CD4-positive, alpha-beta T cell (primary cell): ENCODE measurements at regions of chr16 and their contacts with region 1.

Region 1: GRCh38 chr16:58661199-58661830 is 23.3 kb downstream of the SLC38A7 start:
- DNase-seq: peak in 3 of 14 experiments; percentile 25 to 64 (median 52)
- ATAC-seq: no peak
- H3K4me3 ChIP-seq: no peak overlapping the region
- H3K4me3 Mint-ChIP-seq: no peak overlapping the region
- H3K27ac ChIP-seq: no peak overlapping the region
- H3K27ac Mint-ChIP-seq: no peak overlapping the region
- H3K4me1 ChIP-seq: no peaks in the 10 kb centered on the region
- H3K4me1 Mint-ChIP-seq: no peaks in the 10 kb centered on the region
- H3K27me3 ChIP-seq: no peaks in the 10 kb centered on the region
- H3K27me3 Mint-ChIP-seq: peaks cover 4% of the 10 kb centered on the region
- CTCF ChIP-seq: peak; percentile 15

Region 2: GRCh38 chr16:57955572-57956188 is 705.6 kb before region 1 on chr16:
- CTCF ChIA-PET with region 1: no interaction called
- POLR2A ChIA-PET with region 1: no interaction called
- intact Hi-C with region 1: no loop called
- DNase-seq: no peak
- ATAC-seq: no peak
- H3K4me3 ChIP-seq: no peak overlapping the region
- H3K4me3 Mint-ChIP-seq: no peak overlapping the region
- H3K27ac ChIP-seq: no peak overlapping the region
- H3K27ac Mint-ChIP-seq: no peak overlapping the region
- H3K4me1 ChIP-seq: no peaks in the 10 kb centered on the region
- H3K4me1 Mint-ChIP-seq: no peaks in the 10 kb centered on the region
- H3K27me3 ChIP-seq: no peaks in the 10 kb centered on the region
- H3K27me3 Mint-ChIP-seq: no peaks in the 10 kb centered on the region
- CTCF ChIP-seq: no peak

Region 3: GRCh38 chr16:58336332-58337089 is 324.8 kb before region 1 on chr16:
- CTCF ChIA-PET with region 1: no interaction called
- POLR2A ChIA-PET with region 1: no interaction called
- intact Hi-C with region 1: loop called in 1 of 2 experiments (anchors 2 kb)
- DNase-seq: peak; percentile 61 to 88 (median 81)
- ATAC-seq: peak; percentile 85
- H3K4me3 ChIP-seq: no peak overlapping the region
- H3K4me3 Mint-ChIP-seq: peak overlapping the region; percentile 23
- H3K27ac ChIP-seq: no peak overlapping the region
- H3K27ac Mint-ChIP-seq: no peak overlapping the region
- H3K4me1 ChIP-seq: peaks cover 8% of the 10 kb centered on the region
- H3K4me1 Mint-ChIP-seq: peaks cover 7% of the 10 kb centered on the region
- H3K27me3 ChIP-seq: peaks cover 0 to 1% of the 10 kb centered on the region in 2 experiments
- H3K27me3 Mint-ChIP-seq: peaks cover 14% of the 10 kb centered on the region
- CTCF ChIP-seq: peak; percentile 97

Region 4: GRCh38 chr16:58515125-58515870 is 146.0 kb before region 1 on chr16 and contains the start of gene SETD6:
- CTCF ChIA-PET with region 1: no interaction called
- POLR2A ChIA-PET with region 1: no interaction called
- intact Hi-C with region 1: loop called in 1 of 2 experiments (anchors 5 kb)
- DNase-seq: peak in 13 of 14 experiments; percentile 31 to 80 (median 65)
- ATAC-seq: peak; percentile 53
- H3K4me3 ChIP-seq: peak within 1 kb of the TSS; percentile 75
- H3K4me3 Mint-ChIP-seq: peak within 1 kb of the TSS; percentile 90
- H3K27ac ChIP-seq: peak within 1 kb of the TSS; percentile 66 to 72
- H3K27ac Mint-ChIP-seq: peak within 1 kb of the TSS; percentile 90
- H3K4me1 ChIP-seq: peaks cover 21% of the 10 kb centered on the region
- H3K4me1 Mint-ChIP-seq: peaks cover 38% of the 10 kb centered on the region
- H3K27me3 ChIP-seq: no peaks in the 10 kb centered on the region
- H3K27me3 Mint-ChIP-seq: no peaks in the 10 kb centered on the region
- CTCF ChIP-seq: no peak
- total RNA-seq, gene SETD6: 21.9 to 25.5 TPM

Region 5: DNA sequence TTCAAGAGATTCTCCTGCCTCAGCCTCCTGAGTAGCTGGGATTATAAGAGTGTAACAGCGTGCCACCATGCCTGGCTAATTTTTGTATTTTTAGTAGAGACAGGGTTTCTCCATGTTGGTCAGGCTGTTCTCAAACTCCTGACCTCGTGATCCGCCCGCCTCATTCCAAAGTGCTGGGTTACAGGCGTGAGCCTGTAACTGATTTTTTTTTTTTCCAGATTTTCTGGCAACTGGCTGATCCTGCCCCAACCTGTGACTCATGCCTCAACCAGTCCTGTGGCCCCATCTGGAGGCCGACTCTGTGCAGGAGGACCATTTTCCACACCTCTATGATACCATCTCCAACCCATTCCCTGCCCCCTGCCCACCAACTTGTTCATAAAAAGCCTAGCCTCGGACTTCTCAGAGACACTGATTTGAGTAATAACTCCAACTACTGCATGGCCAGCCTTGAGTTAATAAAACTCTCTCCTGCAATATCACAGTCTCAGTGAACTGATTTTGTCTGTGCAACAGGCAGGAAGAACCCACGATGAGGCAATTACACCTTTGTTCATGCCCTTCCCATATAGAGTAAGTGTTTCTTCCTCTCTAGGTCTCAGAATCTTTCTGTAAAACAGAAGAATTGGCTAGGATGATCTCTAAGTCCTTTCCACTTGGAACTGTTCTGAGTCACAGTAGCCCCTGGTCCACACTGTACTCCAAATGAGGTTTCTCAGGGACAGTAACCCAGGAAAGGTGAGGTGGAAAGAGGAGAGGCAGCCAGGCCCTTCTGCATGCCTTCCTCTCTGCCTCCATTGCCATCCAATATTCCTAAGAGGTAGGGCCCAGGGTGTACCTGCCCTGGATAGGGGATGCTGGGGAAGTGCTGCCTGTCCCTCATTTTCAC is 22.9 kb before region 1 on chr16:
- CTCF ChIA-PET with region 1: no interaction called
- POLR2A ChIA-PET with region 1: no interaction called
- intact Hi-C with region 1: no loop called
- DNase-seq: peak in 1 of 14 experiments; percentile 15
- ATAC-seq: no peak
- H3K4me3 ChIP-seq: no peak overlapping the region
- H3K4me3 Mint-ChIP-seq: no peak overlapping the region
- H3K27ac ChIP-seq: no peak overlapping the region
- H3K27ac Mint-ChIP-seq: no peak overlapping the region
- H3K4me1 ChIP-seq: no peaks in the 10 kb centered on the region
- H3K4me1 Mint-ChIP-seq: no peaks in the 10 kb centered on the region
- H3K27me3 ChIP-seq: no peaks in the 10 kb centered on the region
- H3K27me3 Mint-ChIP-seq: peaks cover 8% of the 10 kb centered on the region
- CTCF ChIP-seq: no peak

Region 6: GRCh38 chr16:58684354-58685083 is 23.2 kb after region 1 on chr16 and contains the start of gene SLC38A7:
- CTCF ChIA-PET with region 1: no interaction called
- POLR2A ChIA-PET with region 1: no interaction called
- intact Hi-C with region 1: no loop called
- DNase-seq: peak; percentile 50 to 84 (median 64)
- ATAC-seq: peak; percentile 90
- H3K4me3 ChIP-seq: peak within 1 kb of the TSS; percentile 77
- H3K4me3 Mint-ChIP-seq: peak within 1 kb of the TSS; percentile 91
- H3K27ac ChIP-seq: peak within 1 kb of the TSS; percentile 13 to 18
- H3K27ac Mint-ChIP-seq: peak within 1 kb of the TSS; percentile 31
- H3K4me1 ChIP-seq: peaks cover 19% of the 10 kb centered on the region
- H3K4me1 Mint-ChIP-seq: peaks cover 20% of the 10 kb centered on the region
- H3K27me3 ChIP-seq: no peaks in the 10 kb centered on the region
- H3K27me3 Mint-ChIP-seq: no peaks in the 10 kb centered on the region
- CTCF ChIP-seq: no peak
- total RNA-seq, gene SLC38A7: 5.3 to 5.6 TPM

Region 7: DNA sequence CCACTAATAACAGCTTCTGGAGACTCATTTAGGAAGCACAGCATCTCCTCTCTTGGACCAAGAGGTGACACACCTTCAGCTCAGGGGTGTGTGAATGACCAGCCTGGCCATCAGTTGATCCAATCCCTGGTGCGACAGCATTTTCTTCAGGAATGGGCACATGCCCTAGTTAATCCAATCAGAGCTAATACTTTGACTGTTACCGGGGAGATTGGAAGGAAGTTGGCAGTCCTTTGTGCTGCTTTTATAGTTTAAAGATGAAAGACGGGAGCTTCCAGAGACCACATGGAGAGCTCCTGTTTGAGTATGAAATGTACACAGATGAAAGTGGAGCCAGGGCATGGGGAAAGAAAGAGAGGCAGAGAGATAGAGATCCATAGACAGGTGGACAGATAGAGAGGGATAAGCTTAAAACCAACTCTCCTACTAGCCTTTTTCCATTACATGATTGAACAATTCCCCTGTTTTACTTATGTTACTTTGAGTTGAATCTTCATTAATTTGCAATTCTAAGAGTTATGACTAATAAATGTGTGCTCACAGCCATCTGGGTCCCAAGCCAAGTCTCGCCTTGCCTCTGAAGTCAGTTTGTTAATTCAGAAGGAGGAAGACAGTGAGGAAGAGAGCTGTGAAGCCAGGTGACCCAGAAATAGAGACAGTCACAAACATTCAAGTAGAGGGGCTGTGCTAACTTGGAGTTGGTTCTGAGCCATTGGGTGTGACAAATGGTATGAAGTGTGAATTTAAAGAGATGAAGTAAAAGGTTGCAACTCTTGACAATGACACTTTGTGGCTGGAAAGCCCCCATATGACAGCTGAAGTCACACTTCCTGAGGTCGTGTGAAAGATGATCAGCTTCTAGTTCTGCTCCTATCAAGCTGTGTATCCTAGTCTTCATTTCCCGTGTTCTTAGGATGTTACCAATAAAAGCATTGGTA is 192.8 kb after region 1 on chr16:
- CTCF ChIA-PET with region 1: no interaction called
- POLR2A ChIA-PET with region 1: no interaction called
- intact Hi-C with region 1: no loop called
- DNase-seq: peak in 1 of 14 experiments; percentile 5
- ATAC-seq: no peak
- H3K4me3 ChIP-seq: no peak overlapping the region
- H3K4me3 Mint-ChIP-seq: no peak overlapping the region
- H3K27ac ChIP-seq: no peak overlapping the region
- H3K27ac Mint-ChIP-seq: no peak overlapping the region
- H3K4me1 ChIP-seq: no peaks in the 10 kb centered on the region
- H3K4me1 Mint-ChIP-seq: no peaks in the 10 kb centered on the region
- H3K27me3 ChIP-seq: no peaks in the 10 kb centered on the region
- H3K27me3 Mint-ChIP-seq: peaks cover 21% of the 10 kb centered on the region
- CTCF ChIP-seq: no peak